Transverse colon (tissue), 4 donors: ENCODE measurements at regions of chr11 and their contacts with region 1.

Region 1: GRCh38 chr11:6531267-6531752 is 34.2 kb downstream of the DNHD1 start:
- DNase-seq: no peak
- H3K4me3 ChIP-seq: no peak overlapping the region
- H3K27ac ChIP-seq: no peak overlapping the region
- H3K4me1 ChIP-seq: no peaks in the 10 kb centered on the region
- H3K27me3 ChIP-seq: no peaks in the 10 kb centered on the region
- CTCF ChIP-seq: peak; percentile 66 to 81 (median 74)
- EP300 ChIP-seq: no peak
- POLR2A ChIP-seq: no peak

Region 2: GRCh38 chr11:6674862-6675261 is 143.6 kb after region 1 on chr11:
- in situ Hi-C with region 1: loop called in 1 of 4 experiments (anchors 10 kb)
- intact Hi-C with region 1: loop called (anchors 10 kb)
- DNase-seq: no peak
- H3K4me3 ChIP-seq: no peak overlapping the region
- H3K27ac ChIP-seq: no peak overlapping the region
- H3K4me1 ChIP-seq: no peaks in the 10 kb centered on the region
- H3K27me3 ChIP-seq: no peaks in the 10 kb centered on the region
- CTCF ChIP-seq: no peak
- EP300 ChIP-seq: no peak
- POLR2A ChIP-seq: no peak

Region 3: GRCh38 chr11:6705905-6706535 is 174.7 kb after region 1 on chr11:
- in situ Hi-C with region 1: loop called in 1 of 4 experiments (anchors 10 kb)
- intact Hi-C with region 1: no loop called
- DNase-seq: peak; percentile 37
- H3K4me3 ChIP-seq: no peak overlapping the region
- H3K27ac ChIP-seq: no peak overlapping the region
- H3K4me1 ChIP-seq: no peaks in the 10 kb centered on the region
- H3K27me3 ChIP-seq: no peaks in the 10 kb centered on the region
- CTCF ChIP-seq: peak; percentile 71 to 94 (median 91)
- EP300 ChIP-seq: no peak
- POLR2A ChIP-seq: no peak